AG04450 (cell line): ENCODE measurements at regions of chr2 and their contacts with region 1.

Region 1: DNA sequence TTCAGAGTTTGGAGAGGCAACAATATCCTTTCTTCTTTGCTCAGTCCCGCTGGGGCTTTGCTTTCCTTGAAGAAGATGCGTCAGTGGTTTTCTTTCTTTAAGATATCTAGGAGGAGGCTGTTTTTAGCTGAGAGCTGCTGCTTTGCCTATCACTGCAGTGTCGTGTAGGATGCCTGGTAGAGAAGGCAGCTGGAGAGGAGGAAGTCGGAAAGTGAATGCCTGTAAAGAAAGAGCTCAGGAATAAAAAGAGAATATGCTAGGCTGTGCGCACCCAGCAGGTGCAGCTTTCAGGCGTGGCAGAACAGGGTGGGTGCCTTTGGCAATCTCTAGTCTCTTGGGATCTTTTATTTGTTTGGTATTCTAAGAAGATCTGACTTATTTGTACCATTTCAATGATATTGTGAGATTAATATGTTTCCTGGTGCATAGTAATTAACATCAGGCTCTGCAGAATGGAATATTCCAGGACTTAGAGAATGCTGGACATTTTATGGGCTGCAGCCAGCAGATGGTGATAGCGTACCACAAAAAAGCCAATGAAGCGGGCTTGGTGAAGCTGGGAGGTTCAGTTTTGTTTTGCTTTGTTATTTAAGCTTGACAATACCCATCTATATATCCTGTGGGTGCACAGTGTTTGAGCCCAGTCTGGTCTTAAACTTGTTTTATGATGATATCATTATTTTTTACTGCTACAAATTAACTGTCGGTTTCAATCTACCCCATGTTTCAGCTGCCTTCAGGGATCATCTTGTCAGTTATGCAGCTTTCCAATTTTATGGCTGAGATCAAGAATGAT is 34.9 kb downstream of the CAVIN2 start:
- DNase-seq: peak; percentile 47
- H3K4me3 ChIP-seq: no peak overlapping the region
- H3K27ac ChIP-seq: no peak overlapping the region
- H3K27me3 ChIP-seq: no peaks in the 10 kb centered on the region
- CTCF ChIP-seq: peak; percentile 90

Region 2: GRCh38 chr2:191566344-191566743 is 245.7 kb before region 1 on chr2:
- CTCF ChIA-PET with region 1: interaction called, 20 read pairs
- POLR2A ChIA-PET with region 1: no interaction called
- DNase-seq: peak; percentile 26
- H3K4me3 ChIP-seq: no peak overlapping the region
- H3K27ac ChIP-seq: no peak overlapping the region
- H3K27me3 ChIP-seq: no peaks in the 10 kb centered on the region
- CTCF ChIP-seq: peak; percentile 91

Region 3: GRCh38 chr2:192148620-192149321 is 336.8 kb after region 1 on chr2:
- CTCF ChIA-PET with region 1: interaction called, 22 read pairs
- POLR2A ChIA-PET with region 1: no interaction called
- DNase-seq: no peak
- H3K4me3 ChIP-seq: no peak overlapping the region
- H3K27ac ChIP-seq: no peak overlapping the region
- H3K27me3 ChIP-seq: no peaks in the 10 kb centered on the region
- CTCF ChIP-seq: peak; percentile 37

Region 4: GRCh38 chr2:192194866-192195547 is 383.0 kb after region 1 on chr2 and contains the start of gene TMEFF2:
- CTCF ChIA-PET with region 1: interaction called, 15 read pairs
- POLR2A ChIA-PET with region 1: no interaction called
- DNase-seq: peak; percentile 66
- H3K4me3 ChIP-seq: peak within 1 kb of the TSS; percentile 77
- H3K27ac ChIP-seq: no peak within 1 kb of the TSS
- H3K27me3 ChIP-seq: peaks cover 3% of the 10 kb centered on the region
- CTCF ChIP-seq: peak; percentile 47
- polyA plus RNA-seq, gene TMEFF2: 3.4 and 4.1 TPM in 2 replicates

Region 5: GRCh38 chr2:192286093-192286701 is 474.2 kb after region 1 on chr2:
- CTCF ChIA-PET with region 1: interaction called, 54 read pairs
- POLR2A ChIA-PET with region 1: no interaction called
- DNase-seq: peak; percentile 23
- H3K4me3 ChIP-seq: no peak overlapping the region
- H3K27ac ChIP-seq: no peak overlapping the region
- H3K27me3 ChIP-seq: no peaks in the 10 kb centered on the region
- CTCF ChIP-seq: peak; percentile 72